ENCODE measurements at regions of chr17 and their contacts with region 1.

Region 1: DNA sequence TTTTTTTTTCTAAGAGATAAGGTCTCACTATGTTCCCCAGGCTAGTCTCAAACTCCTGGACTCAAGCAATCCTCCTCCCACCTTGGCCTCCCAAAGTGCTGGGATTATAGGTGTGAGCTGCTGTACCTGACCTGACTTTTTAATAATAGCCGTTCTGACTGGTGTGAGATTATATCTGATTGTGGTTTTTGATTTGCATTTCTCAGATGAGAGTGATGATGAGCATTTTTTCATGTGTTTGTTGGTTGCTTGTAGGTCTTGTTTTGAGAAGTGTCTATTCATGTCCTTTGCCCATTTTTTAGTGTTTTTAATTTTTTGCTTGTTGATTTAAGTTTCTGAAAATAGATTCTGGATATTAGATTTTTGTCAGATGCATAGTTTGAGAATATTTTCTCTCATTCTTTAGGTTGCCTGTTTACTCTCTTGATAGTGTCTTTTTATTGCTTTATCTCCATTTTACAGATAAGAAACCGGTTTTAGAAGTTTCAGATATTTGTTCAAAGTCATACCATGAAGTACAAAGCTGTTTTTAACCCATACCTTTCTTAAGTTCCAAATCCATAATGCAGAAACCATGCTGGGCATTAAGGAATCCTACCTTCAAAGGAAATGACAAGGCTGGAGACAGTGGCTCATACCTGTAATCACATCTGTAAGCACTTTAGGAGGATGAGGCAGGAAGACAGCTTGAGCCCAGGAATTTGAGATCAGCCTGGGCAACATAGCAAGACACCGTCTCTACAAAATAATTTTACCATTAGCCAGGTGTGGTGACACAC is 168.5 kb upstream of the TBX2 start:
- DNase-seq: no peak
- ATAC-seq: no peak
- H3K4me3 ChIP-seq: no peak overlapping the region
- H3K27ac ChIP-seq: no peak overlapping the region
- H3K4me1 ChIP-seq: no peaks in the 10 kb centered on the region
- H3K27me3 ChIP-seq: no peaks in the 10 kb centered on the region
- CTCF ChIP-seq: no peak

Region 2: GRCh38 chr17:61002316-61002736 is 228.8 kb before region 1 on chr17:
- CTCF ChIA-PET with region 1: no interaction called
- POLR2A ChIA-PET with region 1: no interaction called
- intact Hi-C with region 1: no loop called
- DNase-seq: peak; percentile 81
- ATAC-seq: peak; percentile 42; the same call in 1 of the 2 replicates
- H3K4me3 ChIP-seq: no peak overlapping the region
- H3K27ac ChIP-seq: no peak overlapping the region
- H3K4me1 ChIP-seq: no peaks in the 10 kb centered on the region
- H3K27me3 ChIP-seq: no peaks in the 10 kb centered on the region
- CTCF ChIP-seq: peak; percentile 87

Region 3: GRCh38 chr17:61088553-61088952 is 142.6 kb before region 1 on chr17:
- CTCF ChIA-PET with region 1: no interaction called
- POLR2A ChIA-PET with region 1: no interaction called
- intact Hi-C with region 1: no loop called
- DNase-seq: peak; percentile 17
- ATAC-seq: peak; percentile 31; the same call in 1 of the 2 replicates
- H3K4me3 ChIP-seq: no peak overlapping the region
- H3K27ac ChIP-seq: no peak overlapping the region
- H3K4me1 ChIP-seq: no peaks in the 10 kb centered on the region
- H3K27me3 ChIP-seq: no peaks in the 10 kb centered on the region
- CTCF ChIP-seq: no peak

Region 4: GRCh38 chr17:61302953-61303816 is 72.0 kb after region 1 on chr17:
- CTCF ChIA-PET with region 1: no interaction called
- POLR2A ChIA-PET with region 1: no interaction called
- intact Hi-C with region 1: no loop called
- DNase-seq: no peak
- ATAC-seq: no peak
- H3K4me3 ChIP-seq: no peak overlapping the region
- H3K27ac ChIP-seq: no peak overlapping the region
- H3K4me1 ChIP-seq: peaks cover 4% of the 10 kb centered on the region; the same call in 1 of the 2 replicates
- H3K27me3 ChIP-seq: no peaks in the 10 kb centered on the region
- CTCF ChIP-seq: no peak

Region 5: GRCh38 chr17:61331178-61331577 is 100.0 kb after region 1 on chr17:
- CTCF ChIA-PET with region 1: interaction called, 12 read pairs
- POLR2A ChIA-PET with region 1: no interaction called
- intact Hi-C with region 1: no loop called
- DNase-seq: no peak
- ATAC-seq: no peak
- H3K4me3 ChIP-seq: no peak overlapping the region
- H3K27ac ChIP-seq: no peak overlapping the region
- H3K4me1 ChIP-seq: peaks cover 22% of the 10 kb centered on the region
- H3K27me3 ChIP-seq: no peaks in the 10 kb centered on the region
- CTCF ChIP-seq: no peak